Natural killer cell (primary cell): ENCODE measurements at regions of chr2 and their contacts with region 1.

Region 1: GRCh38 chr2:169798718-169799592 is at the start of gene SSB:
- DNase-seq: peak; percentile 84 to 95
- ATAC-seq: peak; percentile 92 to 96 (median 92)
- H3K4me3 ChIP-seq: peak within 1 kb of the TSS; percentile 65
- H3K4me3 Mint-ChIP-seq: peak within 1 kb of the TSS; percentile 90
- H3K27ac ChIP-seq: peak within 1 kb of the TSS; percentile 89
- H3K27ac Mint-ChIP-seq: peak within 1 kb of the TSS; percentile 90 to 93
- H3K4me1 ChIP-seq: peaks cover 5% of the 10 kb centered on the region
- H3K4me1 Mint-ChIP-seq: peaks cover 22% of the 10 kb centered on the region in 2 donors
- H3K27me3 ChIP-seq: no peaks in the 10 kb centered on the region
- H3K27me3 Mint-ChIP-seq: peaks cover 0 to 2% of the 10 kb centered on the region in 2 donors
- CTCF ChIP-seq: no peak
- total RNA-seq, gene SSB: 95.5 to 125 (median 102) TPM

Region 2: GRCh38 chr2:169824373-169825333 is 25.7 kb after region 1 on chr2 and contains the start of gene METTL5:
- intact Hi-C with region 1: loop called (anchors 2 kb)
- DNase-seq: peak; percentile 78 to 89
- ATAC-seq: peak; percentile 71 to 84 (median 75)
- H3K4me3 ChIP-seq: peak within 1 kb of the TSS; percentile 90
- H3K4me3 Mint-ChIP-seq: peak within 1 kb of the TSS; percentile 94
- H3K27ac ChIP-seq: peak within 1 kb of the TSS; percentile 63
- H3K27ac Mint-ChIP-seq: peak within 1 kb of the TSS; percentile 77 to 87
- H3K4me1 ChIP-seq: peaks cover 28% of the 10 kb centered on the region
- H3K4me1 Mint-ChIP-seq: peaks cover 62 to 65% of the 10 kb centered on the region in 2 donors
- H3K27me3 ChIP-seq: no peaks in the 10 kb centered on the region
- H3K27me3 Mint-ChIP-seq: no peaks in the 10 kb centered on the region
- CTCF ChIP-seq: peak; percentile 94
- total RNA-seq, gene METTL5: 14.7 to 28.2 (median 21.3) TPM

Region 3: DNA sequence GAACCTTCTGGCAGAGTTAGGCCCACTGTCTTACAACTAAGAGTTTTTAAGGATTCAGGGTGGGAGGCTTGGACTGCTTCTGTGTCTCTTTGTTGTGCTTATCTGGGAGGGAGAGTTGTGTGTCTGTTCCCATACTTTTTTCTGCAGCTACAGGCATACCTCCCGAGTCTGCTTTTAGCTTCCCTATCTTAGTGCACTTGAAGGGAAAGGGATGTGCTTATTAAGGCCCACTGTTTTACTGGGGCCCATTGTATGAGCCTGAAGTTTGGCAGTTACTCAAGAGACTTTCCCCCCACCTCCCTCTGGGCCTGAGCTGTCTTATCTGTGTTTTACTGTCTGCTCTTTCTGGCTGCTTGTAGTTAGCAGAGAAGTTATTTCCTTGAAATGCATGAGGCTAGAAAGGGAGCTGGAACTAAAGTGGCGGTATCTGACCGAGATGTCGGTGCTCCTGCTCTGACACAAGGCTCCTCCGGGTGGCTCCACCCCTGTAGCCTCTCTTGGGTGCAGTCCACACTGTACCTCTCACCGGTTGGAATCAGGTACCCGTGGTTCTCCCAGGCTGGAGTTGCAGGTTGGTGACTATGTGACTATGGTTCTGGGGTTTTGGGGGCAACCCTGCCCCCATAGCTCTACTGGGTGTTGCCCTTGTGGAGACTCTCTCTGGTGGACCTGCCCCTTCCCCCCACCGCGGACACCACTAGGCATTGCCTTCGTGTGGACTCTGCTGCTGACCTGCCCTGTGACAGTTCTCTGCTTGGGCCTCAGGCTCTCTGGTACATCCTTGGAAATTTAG is 41.2 kb after region 1 on chr2:
- intact Hi-C with region 1: no loop called
- DNase-seq: no peak
- ATAC-seq: peak in 1 of 3 donors; percentile 39
- H3K4me3 ChIP-seq: no peak overlapping the region
- H3K4me3 Mint-ChIP-seq: no peak overlapping the region
- H3K27ac ChIP-seq: no peak overlapping the region
- H3K27ac Mint-ChIP-seq: peak overlapping the region in 1 of 2 donors; percentile 1
- H3K4me1 ChIP-seq: no peaks in the 10 kb centered on the region
- H3K4me1 Mint-ChIP-seq: peaks cover 32 to 46% of the 10 kb centered on the region in 2 donors
- H3K27me3 ChIP-seq: no peaks in the 10 kb centered on the region
- H3K27me3 Mint-ChIP-seq: no peaks in the 10 kb centered on the region
- CTCF ChIP-seq: no peak

Region 4: DNA sequence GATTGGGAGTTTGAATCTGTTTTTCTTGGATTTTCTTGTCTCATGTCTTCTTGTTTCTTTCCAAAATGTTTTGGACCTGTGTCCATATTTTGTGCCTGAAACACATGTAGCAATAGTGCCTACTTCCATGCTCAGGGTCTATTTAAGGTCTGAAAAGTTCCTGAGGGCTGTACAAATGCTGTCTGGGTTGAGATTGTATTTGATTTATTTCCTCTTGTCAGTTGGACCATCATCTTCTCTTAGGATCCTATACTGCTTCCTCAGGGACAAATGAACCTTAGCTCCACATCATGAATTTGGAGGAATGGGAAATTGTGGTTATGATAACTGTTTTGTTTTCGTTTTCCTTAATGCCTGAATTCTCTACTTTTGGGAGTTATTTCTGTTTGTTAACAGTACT is 88.2 kb after region 1 on chr2:
- intact Hi-C with region 1: no loop called
- DNase-seq: no peak
- ATAC-seq: no peak
- H3K4me3 ChIP-seq: no peak overlapping the region
- H3K4me3 Mint-ChIP-seq: no peak overlapping the region
- H3K27ac ChIP-seq: no peak overlapping the region
- H3K27ac Mint-ChIP-seq: no peak overlapping the region
- H3K4me1 ChIP-seq: no peaks in the 10 kb centered on the region
- H3K4me1 Mint-ChIP-seq: peaks cover 4 to 7% of the 10 kb centered on the region in 2 donors
- H3K27me3 ChIP-seq: no peaks in the 10 kb centered on the region
- H3K27me3 Mint-ChIP-seq: no peaks in the 10 kb centered on the region
- CTCF ChIP-seq: no peak